ENCODE measurements at regions of chr22 and their contacts with region 1.

Region 1: GRCh38 chr22:28829358-28830181 is 29.2 kb upstream of the XBP1 start:
- DNase-seq: peak; percentile 85
- H3K4me3 Mint-ChIP-seq: no peak overlapping the region
- H3K27ac Mint-ChIP-seq: no peak overlapping the region
- H3K4me1 Mint-ChIP-seq: peaks cover 47% of the 10 kb centered on the region
- H3K27me3 Mint-ChIP-seq: peaks cover 3% of the 10 kb centered on the region

Region 2: DNA sequence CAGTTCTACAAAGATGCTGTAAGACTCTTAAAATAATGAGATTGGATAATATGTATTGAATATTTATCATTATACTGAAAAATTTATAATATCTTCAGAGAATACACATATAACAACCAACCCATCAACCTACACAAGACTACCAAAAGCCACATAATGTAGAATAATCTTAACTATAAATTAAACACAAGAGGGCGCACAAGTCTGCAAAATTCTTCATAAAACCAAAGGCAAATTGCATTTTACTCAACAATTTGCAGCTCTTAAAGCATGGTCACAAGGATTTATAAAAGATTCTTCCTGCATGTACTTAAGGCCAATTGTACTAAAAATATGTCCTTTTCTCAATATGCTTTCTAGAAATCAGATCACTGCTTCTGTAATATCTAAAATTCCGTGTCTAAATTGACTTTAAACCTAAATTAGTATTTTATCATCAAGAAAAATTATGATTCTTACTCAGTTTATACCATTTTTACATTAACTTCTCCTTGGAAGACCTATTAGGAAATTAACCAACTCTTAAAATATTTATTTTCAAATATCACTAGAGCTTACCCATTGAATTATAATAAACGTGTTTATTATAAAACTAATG is 228.9 kb before region 1 on chr22:
- CTCF ChIA-PET with region 1: interaction called, 59 read pairs
- DNase-seq: no peak
- H3K4me3 Mint-ChIP-seq: no peak overlapping the region
- H3K27ac Mint-ChIP-seq: no peak overlapping the region
- H3K4me1 Mint-ChIP-seq: no peaks in the 10 kb centered on the region
- H3K27me3 Mint-ChIP-seq: peaks cover 36% of the 10 kb centered on the region

Region 3: GRCh38 chr22:28783786-28784671 is 45.5 kb before region 1 on chr22:
- CTCF ChIA-PET with region 1: interaction called, 47 read pairs
- DNase-seq: no peak
- H3K4me3 Mint-ChIP-seq: no peak overlapping the region
- H3K27ac Mint-ChIP-seq: no peak overlapping the region
- H3K4me1 Mint-ChIP-seq: peaks cover 5% of the 10 kb centered on the region
- H3K27me3 Mint-ChIP-seq: no peaks in the 10 kb centered on the region

Region 4: GRCh38 chr22:28791841-28792490 is 37.6 kb before region 1 on chr22:
- CTCF ChIA-PET with region 1: interaction called, 47 read pairs
- DNase-seq: no peak
- H3K4me3 Mint-ChIP-seq: no peak overlapping the region
- H3K27ac Mint-ChIP-seq: peak overlapping the region; percentile 84
- H3K4me1 Mint-ChIP-seq: peaks cover 69% of the 10 kb centered on the region
- H3K27me3 Mint-ChIP-seq: no peaks in the 10 kb centered on the region

Region 5: GRCh38 chr22:28800308-28801077 is 29.1 kb before region 1 on chr22 and contains the start of gene XBP1:
- CTCF ChIA-PET with region 1: interaction called, 34 read pairs
- DNase-seq: peak; percentile 92
- H3K4me3 Mint-ChIP-seq: peak within 1 kb of the TSS; percentile 84
- H3K27ac Mint-ChIP-seq: peak within 1 kb of the TSS; percentile 91
- H3K4me1 Mint-ChIP-seq: peaks cover 49% of the 10 kb centered on the region
- H3K27me3 Mint-ChIP-seq: peaks cover 3% of the 10 kb centered on the region

Region 6: DNA sequence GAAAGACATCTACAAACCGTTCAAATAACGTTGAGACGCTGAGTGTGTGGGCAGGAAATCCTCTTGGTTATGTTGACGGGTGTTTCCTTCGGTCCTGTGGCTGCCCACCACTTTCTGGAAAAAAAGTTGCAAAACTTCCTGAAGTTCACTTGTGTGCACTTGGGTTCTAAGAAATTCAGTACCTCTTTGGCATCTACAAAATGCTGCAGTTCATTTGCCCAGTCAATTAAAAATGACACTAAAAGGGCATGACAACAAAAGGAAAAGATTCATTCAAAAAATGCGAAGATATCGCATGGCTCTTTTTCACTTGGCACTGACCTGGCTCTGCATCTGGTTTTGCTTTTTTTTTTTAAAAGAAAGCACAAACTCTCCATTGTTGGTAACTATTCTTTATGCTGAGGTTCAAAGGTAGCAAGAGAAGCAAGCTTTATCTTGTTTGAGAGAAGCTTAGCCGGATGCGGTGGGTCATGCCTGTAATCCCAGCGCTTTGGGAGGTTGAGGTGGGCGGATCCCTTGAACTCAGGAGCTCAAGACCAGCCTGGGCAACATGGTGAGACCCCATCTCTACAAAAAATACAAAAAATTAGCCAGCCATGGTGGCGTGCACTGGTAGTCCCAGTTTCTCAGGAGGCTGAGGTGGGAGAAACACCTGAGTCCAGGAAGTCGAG is 18.6 kb before region 1 on chr22:
- CTCF ChIA-PET with region 1: interaction called, 10 read pairs
- DNase-seq: peak; percentile 70
- H3K4me3 Mint-ChIP-seq: peak overlapping the region; percentile 75
- H3K27ac Mint-ChIP-seq: peak overlapping the region; percentile 99
- H3K4me1 Mint-ChIP-seq: peaks cover 88% of the 10 kb centered on the region
- H3K27me3 Mint-ChIP-seq: no peaks in the 10 kb centered on the region

Region 7: GRCh38 chr22:28923826-28924732 is 94.5 kb after region 1 on chr22:
- CTCF ChIA-PET with region 1: no interaction called
- DNase-seq: no peak
- H3K4me3 Mint-ChIP-seq: no peak overlapping the region
- H3K27ac Mint-ChIP-seq: no peak overlapping the region
- H3K4me1 Mint-ChIP-seq: no peaks in the 10 kb centered on the region
- H3K27me3 Mint-ChIP-seq: peaks cover 51% of the 10 kb centered on the region